Activated CD4-positive, alpha-beta T cell treated with anti-CD3 and anti-CD28 coated beads, Interleukin-2, amount 10 ng/mL, durations not matched to agents 24 days and 14 days (primary cell): ENCODE measurements at regions of chr10 and their contacts with region 1.

Region 1: DNA sequence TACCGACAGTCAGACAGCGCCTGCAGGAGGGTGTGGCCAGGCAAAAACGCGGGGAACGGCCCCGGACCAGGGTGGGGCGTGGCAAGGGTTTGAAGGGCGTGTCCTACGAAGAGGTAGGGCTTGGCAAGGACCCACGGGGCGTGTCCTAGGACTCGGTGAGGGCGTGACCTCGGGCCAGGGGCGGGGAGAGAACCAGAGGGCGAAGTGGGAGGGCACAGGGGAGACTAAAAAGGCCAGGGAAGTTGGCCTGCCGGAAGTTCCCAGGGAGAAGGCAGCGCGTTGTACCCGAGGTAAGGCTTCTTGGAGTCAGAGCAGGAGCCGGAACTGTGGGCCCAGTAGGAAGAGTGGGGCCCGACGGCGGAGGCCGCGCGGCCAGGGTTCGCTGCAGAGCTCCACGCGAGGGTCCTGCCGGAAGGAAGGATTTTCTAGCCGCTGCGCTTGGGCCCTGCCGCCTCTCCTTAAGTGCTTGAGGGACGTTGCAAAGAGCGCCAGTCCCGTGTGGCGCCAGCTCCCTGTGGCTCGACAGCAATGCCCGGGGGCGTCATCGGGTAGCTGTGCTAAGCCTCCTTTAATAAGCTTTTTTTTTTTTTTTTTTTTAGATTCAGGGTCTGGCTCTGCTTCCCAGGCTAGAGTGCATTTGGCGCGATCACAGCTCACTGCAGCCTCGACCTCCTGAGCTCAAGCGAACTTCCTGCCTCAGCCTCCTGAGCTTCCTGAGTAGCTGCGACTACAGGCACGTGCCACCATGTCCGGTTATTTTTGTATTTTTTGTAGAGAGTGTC is at the start of gene PTER:
- DNase-seq: peak; percentile 100
- H3K4me3 Mint-ChIP-seq: peak within 1 kb of the TSS; percentile 95
- H3K27ac Mint-ChIP-seq: peak within 1 kb of the TSS; percentile 96
- H3K4me1 Mint-ChIP-seq: peaks cover 37% of the 10 kb centered on the region
- H3K27me3 Mint-ChIP-seq: peaks cover 9% of the 10 kb centered on the region
- total RNA-seq, gene PTER: 16.7 and 17.8 TPM in 2 replicates

Region 2: DNA sequence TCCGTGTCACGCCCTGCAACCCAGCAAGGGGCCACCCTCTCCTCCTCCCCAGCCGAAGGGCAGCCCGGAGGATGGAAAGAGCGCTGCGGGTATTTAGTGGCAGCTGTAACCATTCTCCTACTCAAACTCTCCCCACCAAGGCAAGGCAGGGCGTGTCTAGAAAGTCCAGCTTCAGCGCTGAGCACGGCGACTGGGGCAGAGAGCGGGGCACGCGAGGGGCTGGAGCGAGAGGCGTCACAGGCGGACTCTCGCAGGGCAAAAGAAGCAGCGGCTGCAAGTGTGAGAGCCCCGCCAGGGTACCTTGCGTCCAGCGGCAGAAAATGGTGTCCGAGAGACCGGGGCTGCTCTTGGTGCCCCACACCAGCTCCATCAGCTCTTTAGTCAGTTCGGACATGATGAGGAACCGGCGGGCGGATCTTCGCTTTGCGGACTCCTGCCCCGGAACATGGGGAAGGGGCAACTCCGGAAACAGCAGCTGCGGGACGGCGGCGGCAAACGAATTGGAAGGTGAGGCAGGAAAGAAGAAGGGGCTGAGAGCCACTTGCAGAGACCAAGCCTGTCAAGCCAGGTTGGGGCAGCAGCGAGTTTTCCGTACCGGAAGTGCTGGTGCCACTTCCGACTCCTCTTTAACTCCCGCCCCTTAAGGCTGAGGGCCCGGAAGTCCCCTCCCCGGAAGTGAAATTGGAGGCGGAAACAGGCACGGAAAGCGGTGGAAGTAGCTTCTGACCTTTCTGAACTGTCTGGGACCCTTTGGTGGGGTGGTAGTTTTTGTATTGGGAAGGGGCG is 576.9 kb before region 1 on chr10 and contains the start of gene MINDY3:
- intact Hi-C with region 1: loop called (anchors 5 kb)
- DNase-seq: peak; percentile 93
- H3K4me3 Mint-ChIP-seq: peak within 1 kb of the TSS; percentile 92
- H3K27ac Mint-ChIP-seq: peak within 1 kb of the TSS; percentile 93
- H3K4me1 Mint-ChIP-seq: peaks cover 25% of the 10 kb centered on the region
- H3K27me3 Mint-ChIP-seq: peaks cover 15% of the 10 kb centered on the region
- total RNA-seq, gene MINDY3: 16.3 and 20.1 TPM in 2 replicates

Region 3: GRCh38 chr10:16520900-16521299 is 84.0 kb after region 1 on chr10:
- intact Hi-C with region 1: loop called (anchors 1 kb)
- DNase-seq: peak; percentile 72
- H3K4me3 Mint-ChIP-seq: peak overlapping the region; percentile 58
- H3K27ac Mint-ChIP-seq: no peak overlapping the region
- H3K4me1 Mint-ChIP-seq: peaks cover 4% of the 10 kb centered on the region
- H3K27me3 Mint-ChIP-seq: peaks cover 56% of the 10 kb centered on the region